ENCODE measurements at regions of chr15 and their contacts with region 1.

Region 1: DNA sequence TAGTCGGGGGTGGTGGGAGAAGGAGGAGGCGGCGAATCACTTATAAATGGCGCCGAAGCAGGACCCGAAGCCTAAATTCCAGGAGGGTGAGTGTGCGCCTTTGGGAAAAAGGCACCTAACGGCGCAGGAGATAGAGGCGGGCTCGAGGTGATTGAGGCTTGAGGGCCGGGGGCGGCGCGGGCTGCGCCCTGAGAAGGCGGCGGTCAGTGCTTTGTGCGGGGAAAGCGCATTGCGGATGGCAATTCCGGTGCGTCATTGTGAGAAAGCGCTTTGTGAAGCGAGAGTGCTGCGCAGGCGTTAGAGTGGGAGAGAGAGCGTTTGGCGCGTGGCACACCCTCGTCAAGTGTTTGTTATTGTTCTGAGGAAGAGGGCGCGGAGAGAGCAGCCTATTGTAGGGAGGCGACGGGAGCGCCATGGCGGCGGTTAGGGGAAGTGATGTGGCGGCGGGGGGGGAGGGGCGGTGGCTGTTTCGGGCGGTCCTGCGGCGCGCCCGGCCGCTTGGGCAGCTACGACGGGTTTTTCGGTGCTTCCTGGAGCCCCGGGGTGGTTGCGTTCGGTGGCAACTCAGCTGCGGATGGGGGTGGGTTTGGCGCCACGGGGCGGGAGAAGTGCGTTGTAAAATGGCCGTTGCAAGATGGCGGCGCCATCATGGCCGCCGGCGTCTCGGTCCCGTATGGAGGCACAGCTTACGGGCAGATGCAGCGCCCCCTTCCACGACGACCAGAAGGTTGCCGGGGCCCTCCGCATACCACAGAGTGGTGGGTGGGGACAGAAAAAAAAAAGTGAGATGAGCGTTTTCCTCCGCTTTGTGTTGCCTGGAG is 492 bp downstream of the MORF4L1 start:
- DNase-seq: peak; percentile 87
- H3K4me3 ChIP-seq: peak overlapping the region; percentile 63 to 100 (median 95)
- H3K27ac ChIP-seq: peak overlapping the region; percentile 97
- H3K4me1 ChIP-seq: peaks cover 8% of the 10 kb centered on the region
- H3K27me3 ChIP-seq: no peaks in the 10 kb centered on the region
- CTCF ChIP-seq: no peak

Region 2: DNA sequence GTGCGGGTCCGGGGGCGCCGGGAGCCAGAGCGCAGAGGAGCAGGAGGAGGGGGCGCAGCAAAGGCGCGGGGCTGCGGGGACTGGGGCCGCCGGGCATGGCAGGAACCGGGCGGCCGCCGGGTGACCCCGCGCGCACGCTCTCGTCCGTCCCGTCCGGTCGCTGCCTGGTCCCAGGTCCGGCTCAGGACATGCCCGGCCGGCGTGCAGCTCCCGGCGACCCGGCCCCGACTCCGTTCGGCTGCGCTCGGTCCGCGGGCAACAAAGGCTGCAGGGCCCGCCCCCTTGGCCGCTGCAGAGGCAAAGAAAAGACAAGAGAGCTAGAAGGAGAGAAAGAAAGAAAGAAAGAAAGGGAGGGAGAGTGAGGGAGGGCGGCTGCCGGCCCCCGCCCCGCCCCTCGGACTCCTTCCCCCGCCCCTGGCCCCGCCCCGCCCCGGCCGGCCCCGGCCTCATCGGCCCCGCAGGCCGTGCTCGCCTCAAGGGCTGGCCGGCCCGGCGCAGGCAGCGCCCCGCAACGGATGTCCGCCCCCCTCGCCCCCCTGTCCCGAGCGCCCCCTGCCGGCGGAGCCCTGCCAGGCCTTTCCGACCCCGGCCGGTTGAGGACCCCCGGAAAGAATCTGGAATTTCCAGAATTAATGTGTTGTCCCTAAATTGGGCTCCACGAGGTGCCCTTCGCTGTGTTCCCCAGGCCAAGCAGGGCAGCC is 61.9 kb before region 1 on chr15 and contains the start of gene ADAMTS7:
- CTCF ChIA-PET with region 1: interaction called, 15 read pairs
- dilution Hi-C with region 1: no loop called
- in situ Hi-C with region 1: no loop called
- intact Hi-C with region 1: no loop called
- DNase-seq: peak; percentile 51
- H3K4me3 ChIP-seq: peak within 1 kb of the TSS; percentile 61 to 74 (median 70)
- H3K27ac ChIP-seq: peak within 1 kb of the TSS; percentile 11
- H3K4me1 ChIP-seq: peaks cover 7% of the 10 kb centered on the region
- H3K27me3 ChIP-seq: no peaks in the 10 kb centered on the region
- CTCF ChIP-seq: peak; percentile 26 to 64
- total RNA-seq, gene ADAMTS7: 6.7 to 10.6 TPM

Measured in mammary epithelial cell (primary cell).